PC-3 (cell line): ENCODE measurements at regions of chr18 and their contacts with region 1.

Region 1: DNA sequence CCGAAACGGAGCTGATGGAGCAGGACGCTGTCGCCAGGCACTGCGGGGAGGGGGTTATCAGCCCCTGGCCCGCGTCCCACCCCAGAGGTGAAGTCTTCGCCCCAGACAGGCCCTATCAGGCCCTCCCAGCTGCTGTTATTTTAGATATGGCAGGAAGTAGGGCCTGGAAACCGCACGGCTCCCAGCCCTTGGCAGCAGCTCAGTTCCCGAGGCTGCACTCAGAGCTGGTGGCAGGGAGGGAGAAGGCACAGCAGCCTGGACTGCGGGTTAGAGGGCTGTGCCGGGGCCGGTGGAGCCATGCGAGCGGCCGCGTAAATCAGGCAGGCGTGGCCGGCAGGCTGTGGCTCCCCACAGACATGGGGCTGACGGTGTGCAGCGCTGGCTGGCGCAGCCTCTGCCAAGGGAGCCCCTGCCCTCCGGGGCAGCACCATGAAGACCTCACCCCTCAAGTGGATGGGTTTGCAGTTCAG is 111.4 kb downstream of the NFATC1 start:
- DNase-seq: no peak
- ATAC-seq: peak; percentile 21
- H3K4me3 ChIP-seq: peak overlapping the region; percentile 59
- H3K27ac ChIP-seq: no peak overlapping the region
- H3K4me1 ChIP-seq: peaks cover 4% of the 10 kb centered on the region; the same call in 1 of the 2 replicates
- H3K27me3 ChIP-seq: no peaks in the 10 kb centered on the region
- CTCF ChIP-seq: no peak

Region 2: DNA sequence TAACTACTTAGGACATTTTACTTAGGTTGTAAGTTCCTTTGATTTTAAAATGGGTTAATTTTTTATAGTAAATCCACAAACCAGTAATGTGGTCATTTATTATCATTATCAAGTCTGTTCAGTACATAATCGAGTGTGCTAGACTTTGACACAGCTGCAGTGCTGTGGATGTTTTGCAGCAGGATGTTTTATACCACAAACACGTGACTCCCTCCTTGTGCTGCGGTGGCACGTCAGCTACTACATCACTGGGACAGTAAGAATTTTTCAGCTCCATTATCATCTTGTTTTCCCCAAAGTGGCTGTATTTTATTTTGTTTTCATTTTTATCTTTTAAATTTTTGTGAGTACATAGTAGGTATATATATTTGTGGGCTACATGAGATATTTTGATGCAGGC is 367.9 kb before region 1 on chr18:
- CTCF ChIA-PET with region 1: no interaction called
- POLR2A ChIA-PET with region 1: no interaction called
- intact Hi-C with region 1: no loop called
- DNase-seq: no peak
- ATAC-seq: no peak
- H3K4me3 ChIP-seq: no peak overlapping the region
- H3K27ac ChIP-seq: no peak overlapping the region
- H3K4me1 ChIP-seq: no peaks in the 10 kb centered on the region
- H3K27me3 ChIP-seq: no peaks in the 10 kb centered on the region
- CTCF ChIP-seq: no peak

Region 3: GRCh38 chr18:79395761-79396387 is 111.2 kb before region 1 on chr18 and contains the start of gene NFATC1:
- CTCF ChIA-PET with region 1: no interaction called
- POLR2A ChIA-PET with region 1: no interaction called
- intact Hi-C with region 1: loop called (anchors 5 kb)
- DNase-seq: peak; percentile 59
- ATAC-seq: peak; percentile 41
- H3K4me3 ChIP-seq: peak within 1 kb of the TSS; percentile 70
- H3K27ac ChIP-seq: peak within 1 kb of the TSS; percentile 72
- H3K4me1 ChIP-seq: peaks cover 16% of the 10 kb centered on the region; the same call in 1 of the 2 replicates
- H3K27me3 ChIP-seq: no peaks in the 10 kb centered on the region
- CTCF ChIP-seq: no peak
- total RNA-seq, gene NFATC1: 5.9 and 9.8 TPM in 2 replicates

Region 4: GRCh38 chr18:79439201-79440023 is 67.7 kb before region 1 on chr18:
- CTCF ChIA-PET with region 1: no interaction called
- POLR2A ChIA-PET with region 1: no interaction called
- intact Hi-C with region 1: no loop called
- DNase-seq: peak; percentile 57
- ATAC-seq: peak; percentile 70
- H3K4me3 ChIP-seq: 0 out of 2 replicates have a peak overlapping the region, but pooled peaks have one; percentile 2
- H3K27ac ChIP-seq: no peak overlapping the region
- H3K4me1 ChIP-seq: peaks cover 12% of the 10 kb centered on the region; the same call in 1 of the 2 replicates
- H3K27me3 ChIP-seq: no peaks in the 10 kb centered on the region
- CTCF ChIP-seq: no peak